Activated CD4-positive, alpha-beta memory T cell treated with anti-CD3 and anti-CD28 coated beads for 36 hours (primary cell): ENCODE measurements at regions of chr4 and their contacts with region 1.

Region 1: DNA sequence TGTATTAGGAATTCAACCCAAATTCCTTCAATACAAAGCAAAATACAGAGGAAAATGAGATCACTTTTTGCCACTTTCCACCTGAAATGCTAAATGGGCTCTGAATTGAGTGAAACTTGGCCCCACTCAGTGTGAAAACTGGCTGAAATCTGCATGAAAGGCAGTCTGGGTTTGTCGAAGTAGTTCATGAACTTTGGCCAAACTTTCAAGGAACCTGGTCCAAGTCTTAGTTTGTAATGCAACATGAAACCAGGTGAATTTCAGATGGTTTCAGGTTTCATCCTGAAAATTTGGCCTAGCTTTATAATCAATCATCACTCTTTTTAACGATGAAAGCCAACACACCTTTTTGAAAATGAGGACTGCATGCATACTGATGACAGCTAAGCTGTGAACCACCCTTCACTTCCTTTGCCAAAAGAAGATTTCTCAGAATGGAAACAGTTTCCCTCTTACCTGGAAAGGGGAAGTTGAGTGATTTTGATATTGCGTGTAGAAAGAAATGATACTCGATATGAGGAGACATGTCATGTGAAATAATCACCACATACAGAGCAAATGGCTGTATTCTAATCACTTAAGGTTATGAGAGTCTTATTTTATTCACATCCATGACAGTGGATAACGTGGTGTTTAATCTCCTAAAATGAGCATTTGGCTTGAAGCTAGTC is 209.9 kb upstream of the ETNPPL start:
- DNase-seq: no peak
- H3K4me3 Mint-ChIP-seq: no peak overlapping the region
- H3K27ac Mint-ChIP-seq: peak overlapping the region; percentile 68
- H3K4me1 Mint-ChIP-seq: peaks cover 22% of the 10 kb centered on the region
- H3K27me3 Mint-ChIP-seq: no peaks in the 10 kb centered on the region

Region 2: GRCh38 chr4:108959491-108959890 is 13.3 kb before region 1 on chr4:
- CTCF ChIA-PET with region 1: no interaction called
- POLR2A ChIA-PET with region 1: no interaction called
- intact Hi-C with region 1: no loop called
- DNase-seq: no peak
- H3K4me3 Mint-ChIP-seq: no peak overlapping the region
- H3K27ac Mint-ChIP-seq: no peak overlapping the region
- H3K4me1 Mint-ChIP-seq: no peaks in the 10 kb centered on the region
- H3K27me3 Mint-ChIP-seq: peaks cover 7% of the 10 kb centered on the region

Region 3: GRCh38 chr4:109278594-109279031 is 305.9 kb after region 1 on chr4:
- CTCF ChIA-PET with region 1: no interaction called
- POLR2A ChIA-PET with region 1: no interaction called
- intact Hi-C with region 1: loop called (anchors 1 kb)
- DNase-seq: no peak
- H3K4me3 Mint-ChIP-seq: no peak overlapping the region
- H3K27ac Mint-ChIP-seq: no peak overlapping the region
- H3K4me1 Mint-ChIP-seq: peaks cover 13% of the 10 kb centered on the region
- H3K27me3 Mint-ChIP-seq: peaks cover 14% of the 10 kb centered on the region

Region 4: DNA sequence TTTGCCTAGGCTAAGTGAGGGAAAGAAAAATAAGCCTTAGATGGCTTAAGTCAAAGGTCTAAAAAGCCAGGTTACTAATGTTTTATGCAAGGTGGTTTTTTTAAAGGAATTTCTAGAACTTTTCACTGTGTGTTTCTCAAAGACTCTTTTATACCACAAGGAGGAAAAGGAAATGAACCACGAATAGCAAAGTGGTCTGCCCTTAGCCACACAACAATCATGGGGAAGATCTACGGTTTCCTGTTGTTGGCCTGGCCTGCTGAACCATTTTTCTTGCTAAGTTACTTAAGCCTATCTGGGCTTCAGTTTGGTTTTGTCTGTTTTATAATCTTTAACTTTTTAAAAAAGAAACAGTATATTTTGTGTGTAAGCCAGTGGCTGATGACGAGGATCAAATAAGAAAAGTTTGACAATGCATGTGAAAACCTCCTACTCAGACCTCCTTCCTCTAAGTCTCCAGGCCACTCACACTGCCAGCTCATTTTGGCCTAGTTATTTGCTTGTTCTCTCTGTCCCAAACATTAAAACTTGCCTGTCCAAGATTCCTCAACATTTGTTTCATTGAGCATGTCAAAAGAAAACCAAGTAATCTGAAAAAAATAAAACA is 386.4 kb after region 1 on chr4:
- CTCF ChIA-PET with region 1: no interaction called
- POLR2A ChIA-PET with region 1: no interaction called
- intact Hi-C with region 1: loop called (anchors 1 kb)
- DNase-seq: peak; percentile 35
- H3K4me3 Mint-ChIP-seq: no peak overlapping the region
- H3K27ac Mint-ChIP-seq: peak overlapping the region; percentile 67
- H3K4me1 Mint-ChIP-seq: peaks cover 21% of the 10 kb centered on the region
- H3K27me3 Mint-ChIP-seq: peaks cover 32% of the 10 kb centered on the region